Pancreas (tissue), 10 donors: ENCODE measurements at regions of chr11 and their contacts with region 1.

Region 1: GRCh38 chr11:86162239-86162638 is 82.3 kb upstream of the EED start:
- DNase-seq: peak in 1 of 6 donors; percentile 26
- ATAC-seq: peak in 3 of 4 donors; percentile 60 to 81 (median 67)
- H3K4me3 ChIP-seq: no peak overlapping the region
- H3K27ac ChIP-seq: no peak overlapping the region
- H3K4me1 ChIP-seq: peaks cover 0 to 7% (median 5%) of the 10 kb centered on the region in 3 donors
- H3K27me3 ChIP-seq: no peaks in the 10 kb centered on the region
- CTCF ChIP-seq: no peak

Region 2: GRCh38 chr11:85725510-85726258 is 436.6 kb before region 1 on chr11:
- intact Hi-C with region 1: no loop called
- DNase-seq: no peak
- ATAC-seq: peak in 2 of 4 donors; percentile 39 to 45
- H3K4me3 ChIP-seq: no peak overlapping the region
- H3K27ac ChIP-seq: no peak overlapping the region
- H3K4me1 ChIP-seq: no peaks in the 10 kb centered on the region
- H3K27me3 ChIP-seq: peaks cover 0 to under 1% (median 0%) of the 10 kb centered on the region in 4 donors
- CTCF ChIP-seq: no peak

Region 3: GRCh38 chr11:86069408-86070101 is 92.7 kb before region 1 on chr11:
- intact Hi-C with region 1: loop called in 1 of 3 experiments (anchors 10 kb)
- DNase-seq: peak in 1 of 6 donors; percentile 42
- ATAC-seq: peak; percentile 12 to 41 (median 24)
- H3K4me3 ChIP-seq: peak overlapping the region in 3 of 4 donors; percentile 5 to 92 (median 84)
- H3K27ac ChIP-seq: peak overlapping the region; percentile 85 to 94 (median 88)
- H3K4me1 ChIP-seq: peaks cover 5 to 24% (median 19%) of the 10 kb centered on the region in 3 donors
- H3K27me3 ChIP-seq: no peaks in the 10 kb centered on the region
- CTCF ChIP-seq: no peak